Ascending aorta (tissue), 2 donors: ENCODE measurements at regions of chr3 and their contacts with region 1.

Region 1: DNA sequence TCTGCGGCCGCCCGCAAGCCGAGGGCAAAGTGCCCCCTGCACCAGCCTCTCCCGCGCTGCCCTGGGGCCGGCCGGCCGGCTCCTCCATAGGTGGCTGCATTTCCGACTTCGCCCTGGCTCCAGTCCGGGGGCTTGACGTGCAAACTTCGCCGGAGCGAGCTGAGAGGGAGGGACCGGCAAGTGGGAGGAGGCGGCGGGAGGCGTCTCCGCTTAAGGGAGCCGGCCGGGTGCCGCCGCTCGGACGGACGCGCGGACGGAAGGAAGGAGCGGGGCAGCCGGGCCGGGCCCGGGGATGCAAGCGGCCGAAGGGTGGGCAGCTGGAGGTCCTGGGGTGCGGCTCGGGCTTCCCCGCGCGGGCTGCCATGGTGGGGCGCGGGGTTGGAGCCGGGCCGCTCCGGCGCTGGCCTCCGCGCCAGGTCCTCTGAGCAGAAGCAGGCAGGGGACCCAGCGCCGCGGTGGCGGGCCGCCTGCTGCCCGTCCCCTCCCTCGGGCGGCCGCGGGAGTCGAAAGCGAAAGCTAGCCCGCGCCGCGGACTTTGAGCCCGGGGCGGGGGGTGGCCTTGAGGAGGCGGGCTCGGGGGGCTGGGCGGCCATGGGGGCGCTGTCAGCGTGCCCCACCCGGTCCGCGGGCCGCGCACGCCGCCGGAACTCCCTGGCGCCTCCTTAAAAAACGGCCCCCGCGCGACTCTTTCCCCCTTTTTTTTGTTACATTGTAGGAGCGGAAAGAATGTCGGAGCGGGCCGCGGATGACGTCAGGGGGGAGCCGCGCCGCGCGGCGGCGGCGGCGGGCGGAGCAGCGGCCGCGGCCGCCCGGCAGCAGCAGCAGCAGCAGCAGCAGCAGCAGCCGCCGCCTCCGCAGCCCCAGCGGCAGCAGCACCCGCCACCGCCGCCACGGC is at the start of gene SCAANT1:
- DNase-seq: peak; percentile 53 to 96
- H3K4me3 ChIP-seq: peak within 1 kb of the TSS; percentile 97 to 98
- H3K27ac ChIP-seq: peak within 1 kb of the TSS; percentile 99 to 100
- H3K4me1 ChIP-seq: peaks cover 3 to 17% of the 10 kb centered on the region in 2 donors
- H3K27me3 ChIP-seq: no peaks in the 10 kb centered on the region
- CTCF ChIP-seq: peak in 1 of 3 experiments; percentile 35
- total RNA-seq, gene SCAANT1: not detected

Region 2: GRCh38 chr3:63863148-63864007 is 48.7 kb before region 1 on chr3 and contains the starts of genes ATXN7 and THOC7:
- intact Hi-C with region 1: loop called (anchors 2 kb)
- DNase-seq: peak in 1 of 2 donors; percentile 88
- H3K4me3 ChIP-seq: peak within 1 kb of the TSS; percentile 88 to 94
- H3K27ac ChIP-seq: peak within 1 kb of the TSS; percentile 87 to 89
- H3K4me1 ChIP-seq: peaks cover 0 to 3% of the 10 kb centered on the region in 2 donors
- H3K27me3 ChIP-seq: no peaks in the 10 kb centered on the region
- CTCF ChIP-seq: no peak
- total RNA-seq, gene ATXN7: 13.2 TPM
- total RNA-seq, gene THOC7: 13.8 TPM

Region 3: DNA sequence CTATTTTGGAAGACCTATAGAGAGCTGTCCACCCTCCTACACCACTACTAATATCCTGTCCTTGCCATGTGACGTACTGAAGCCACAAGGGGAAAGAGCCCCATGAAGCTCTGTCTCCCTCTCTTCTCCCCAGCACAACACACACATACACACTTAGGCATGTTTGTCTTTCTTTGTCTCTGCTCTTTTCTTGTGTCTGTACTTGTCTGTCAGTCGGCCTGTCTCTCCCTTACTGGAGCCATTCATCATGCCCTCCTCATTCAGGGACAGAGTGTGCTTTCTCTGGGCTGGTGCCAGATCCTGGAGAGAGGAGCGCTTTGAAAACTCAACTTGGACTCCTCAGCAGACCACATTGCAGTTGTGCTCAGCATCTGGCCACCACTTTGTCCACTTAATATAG is 63.6 kb after region 1 on chr3:
- intact Hi-C with region 1: loop called (anchors 5 kb)
- DNase-seq: no peak
- H3K4me3 ChIP-seq: no peak overlapping the region
- H3K27ac ChIP-seq: no peak overlapping the region
- H3K4me1 ChIP-seq: peaks cover 3 to 21% of the 10 kb centered on the region in 2 donors
- H3K27me3 ChIP-seq: no peaks in the 10 kb centered on the region
- CTCF ChIP-seq: no peak

Region 4: GRCh38 chr3:64023187-64023848 is 111.2 kb after region 1 on chr3 and contains the start of gene PSMD6:
- intact Hi-C with region 1: loop called (anchors 2 kb)
- DNase-seq: peak in 1 of 2 donors; percentile 93
- H3K4me3 ChIP-seq: peak within 1 kb of the TSS; percentile 86 to 95
- H3K27ac ChIP-seq: peak within 1 kb of the TSS; percentile 83 to 85
- H3K4me1 ChIP-seq: peaks cover 6 to 19% of the 10 kb centered on the region in 2 donors
- H3K27me3 ChIP-seq: no peaks in the 10 kb centered on the region
- CTCF ChIP-seq: peak; percentile 98 to 100 (median 99)
- total RNA-seq, gene PSMD6: 49.2 TPM